ENCODE measurements at regions of chr1 and their contacts with region 1.

Region 1: GRCh38 chr1:156524481-156524869 is 23.9 kb upstream of the MEF2D start:
- DNase-seq: no peak
- H3K4me3 ChIP-seq: no peak overlapping the region
- H3K27ac ChIP-seq: no peak overlapping the region
- H3K4me1 ChIP-seq: no peaks in the 10 kb centered on the region
- H3K27me3 ChIP-seq: no peaks in the 10 kb centered on the region
- CTCF ChIP-seq: no peak

Region 2: DNA sequence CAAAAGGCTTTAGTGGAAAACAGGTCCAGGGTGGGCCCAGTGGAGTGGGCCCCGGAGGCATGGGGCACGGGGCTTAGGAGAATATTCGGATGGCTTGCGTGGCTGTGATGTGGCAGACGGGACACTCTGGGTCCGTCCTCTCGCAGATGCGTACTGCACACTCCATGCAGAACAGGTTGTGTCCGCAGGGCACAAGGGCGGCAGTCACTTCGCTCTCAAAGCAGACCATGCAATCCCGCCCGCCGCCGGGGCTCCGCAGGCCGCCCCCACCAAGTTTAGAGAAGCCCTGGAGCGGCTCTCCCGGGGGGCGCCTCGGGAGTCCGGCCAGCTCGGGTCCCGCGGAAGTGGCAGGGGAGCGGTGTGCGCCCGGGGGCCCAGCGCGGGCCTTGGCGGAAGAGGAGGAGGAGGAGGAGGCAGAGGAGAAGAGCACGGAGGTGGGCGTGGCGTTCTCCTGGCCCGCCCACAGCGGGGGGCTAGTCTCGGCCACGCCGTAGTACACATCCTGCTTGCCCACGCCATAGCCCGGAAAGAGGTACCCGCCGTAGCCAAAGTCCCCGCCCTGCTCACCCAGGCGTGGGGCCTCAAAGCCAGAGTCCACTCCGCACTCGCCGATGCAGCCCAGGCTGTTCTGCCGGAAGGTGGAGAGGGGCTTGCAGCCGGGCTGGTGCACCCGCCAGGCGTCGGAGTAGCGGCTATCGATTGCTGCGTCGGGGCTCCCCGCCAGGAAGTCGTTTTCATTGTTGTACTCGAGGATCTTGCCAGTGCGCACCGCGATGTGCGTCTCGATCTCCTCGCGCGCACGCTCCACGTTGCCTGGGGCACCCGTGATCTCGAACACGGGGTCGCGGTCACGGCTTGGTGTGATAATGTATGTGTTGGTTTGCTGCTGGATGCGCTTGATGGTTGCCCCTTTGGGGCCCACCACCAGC is 447.7 kb before region 1 on chr1:
- intact Hi-C with region 1: no loop called
- DNase-seq: no peak
- H3K4me3 ChIP-seq: peak overlapping the region; percentile 16 to 27
- H3K27ac ChIP-seq: no peak overlapping the region
- H3K4me1 ChIP-seq: peaks cover 0 to 2% of the 10 kb centered on the region in 2 donors
- H3K27me3 ChIP-seq: no peaks in the 10 kb centered on the region
- CTCF ChIP-seq: no peak

Region 3: GRCh38 chr1:156560585-156561183 is 36.2 kb after region 1 on chr1:
- intact Hi-C with region 1: loop called (anchors 5 kb)
- DNase-seq: peak in 1 of 2 donors; percentile 45
- H3K4me3 ChIP-seq: no peak overlapping the region
- H3K27ac ChIP-seq: no peak overlapping the region
- H3K4me1 ChIP-seq: no peaks in the 10 kb centered on the region
- H3K27me3 ChIP-seq: no peaks in the 10 kb centered on the region
- CTCF ChIP-seq: no peak

Region 4: DNA sequence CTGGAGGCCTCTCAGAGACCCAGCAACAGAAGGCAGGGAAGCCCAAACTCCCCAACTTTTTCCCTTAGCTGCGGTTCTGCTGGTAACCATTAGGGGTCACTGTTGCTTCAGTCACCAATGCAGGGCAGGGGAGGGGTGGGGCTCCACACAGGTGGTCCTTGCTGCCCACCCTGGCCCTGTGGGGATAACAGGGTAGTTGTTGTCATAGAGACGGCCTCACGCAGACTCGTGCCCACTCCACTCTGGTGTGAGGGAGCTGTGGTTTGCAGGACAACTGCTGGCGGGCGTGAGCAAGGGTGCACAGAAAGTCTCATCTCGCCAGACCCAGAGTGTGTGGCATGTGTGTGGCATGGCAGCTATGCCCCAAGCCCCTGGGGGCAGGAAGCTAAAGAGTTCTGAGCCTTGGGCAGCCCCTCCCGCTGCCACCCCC is 314.5 kb after region 1 on chr1:
- intact Hi-C with region 1: no loop called
- DNase-seq: no peak
- H3K4me3 ChIP-seq: no peak overlapping the region
- H3K27ac ChIP-seq: no peak overlapping the region
- H3K4me1 ChIP-seq: no peaks in the 10 kb centered on the region
- H3K27me3 ChIP-seq: no peaks in the 10 kb centered on the region
- CTCF ChIP-seq: peak; percentile 60 to 82 (median 71)

Measured in ascending aorta (tissue), 2 donors.